ENCODE measurements at regions of chr5 and their contacts with region 1.

Region 1: GRCh38 chr5:150410524-150411244 is 2.0 kb downstream of the CD74 start:
- DNase-seq: peak; percentile 74
- ATAC-seq: peak; percentile 75
- H3K4me3 ChIP-seq: no peak overlapping the region
- H3K27ac ChIP-seq: no peak overlapping the region
- H3K4me1 ChIP-seq: no peaks in the 10 kb centered on the region
- H3K27me3 ChIP-seq: 0 out of 2 replicates have a peak, but pooled peaks cover 1% of the 10 kb centered on the region
- CTCF ChIP-seq: no peak
- POLR2A ChIP-seq: no peak
- RAD21 ChIP-seq: no peak

Region 2: DNA sequence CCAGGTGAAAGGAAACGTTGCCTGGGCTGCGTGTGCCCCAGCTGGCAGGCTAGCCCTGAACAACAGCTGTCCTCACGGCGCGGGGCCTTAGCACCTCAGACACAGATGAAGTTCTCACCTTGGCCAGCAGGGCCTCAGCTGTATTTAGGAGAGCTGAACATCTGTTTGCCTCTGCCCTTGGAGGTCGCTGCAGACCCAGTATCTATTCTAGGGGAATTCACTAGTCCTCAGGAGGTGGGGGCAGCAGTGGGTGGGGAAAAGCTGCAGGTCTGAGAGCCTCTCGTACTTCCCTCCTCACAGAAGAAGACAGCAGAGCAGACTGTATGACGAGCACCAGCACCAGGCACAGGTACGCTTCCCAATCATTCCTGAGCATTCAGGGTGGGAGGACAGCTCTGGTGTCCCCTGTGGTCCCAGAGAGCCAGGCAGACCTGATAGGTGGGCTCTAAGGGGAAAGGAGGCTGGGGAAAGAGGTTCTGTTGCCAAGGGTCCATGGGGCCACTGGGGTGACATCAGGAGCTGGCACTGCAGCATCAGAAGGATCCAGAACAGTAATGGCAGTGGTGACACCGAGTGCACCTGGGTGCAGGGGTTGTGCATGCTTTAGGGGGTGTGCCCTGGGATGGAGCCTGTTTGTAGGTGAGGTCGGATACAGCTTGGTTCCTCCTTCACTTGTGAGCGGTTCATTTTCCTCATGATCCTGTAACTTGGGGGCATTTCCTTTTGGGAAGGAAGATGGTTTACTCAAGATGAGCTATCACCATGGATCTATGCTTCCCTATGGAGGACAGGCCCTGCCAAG is 11.8 kb before region 1 on chr5:
- CTCF ChIA-PET with region 1: no interaction called
- POLR2A ChIA-PET with region 1: interaction called, 12 read pairs
- dilution Hi-C with region 1: no loop called
- in situ Hi-C with region 1: no loop called
- intact Hi-C with region 1: no loop called
- DNase-seq: no peak
- ATAC-seq: no peak
- H3K4me3 ChIP-seq: no peak overlapping the region
- H3K27ac ChIP-seq: peak overlapping the region; percentile 39; the same call in 1 of the 2 replicates
- H3K4me1 ChIP-seq: peaks cover 19% of the 10 kb centered on the region
- H3K27me3 ChIP-seq: no peaks in the 10 kb centered on the region
- CTCF ChIP-seq: peak; percentile 20; the same call in 1 of the 2 replicates
- POLR2A ChIP-seq: no peak
- RAD21 ChIP-seq: no peak

Measured in IMR-90 (cell line).